Posterior cingulate gyrus (tissue), 11 donors: ENCODE measurements at regions of chr6 and their contacts with region 1.

Region 1: GRCh38 chr6:90478789-90479602 is 107.9 kb downstream of the MAP3K7 start:
- DNase-seq: peak; percentile 69 to 97 (median 84)

Region 2: GRCh38 chr6:89940225-89941027 is 538.6 kb before region 1 on chr6:
- intact Hi-C with region 1: loop called (anchors 1 kb)
- DNase-seq: peak in 9 of 10 donors; percentile 49 to 95 (median 79)

Region 3: GRCh38 chr6:90078513-90079289 is 400.3 kb before region 1 on chr6:
- intact Hi-C with region 1: loop called (anchors 10 kb)
- DNase-seq: no peak

Region 4: DNA sequence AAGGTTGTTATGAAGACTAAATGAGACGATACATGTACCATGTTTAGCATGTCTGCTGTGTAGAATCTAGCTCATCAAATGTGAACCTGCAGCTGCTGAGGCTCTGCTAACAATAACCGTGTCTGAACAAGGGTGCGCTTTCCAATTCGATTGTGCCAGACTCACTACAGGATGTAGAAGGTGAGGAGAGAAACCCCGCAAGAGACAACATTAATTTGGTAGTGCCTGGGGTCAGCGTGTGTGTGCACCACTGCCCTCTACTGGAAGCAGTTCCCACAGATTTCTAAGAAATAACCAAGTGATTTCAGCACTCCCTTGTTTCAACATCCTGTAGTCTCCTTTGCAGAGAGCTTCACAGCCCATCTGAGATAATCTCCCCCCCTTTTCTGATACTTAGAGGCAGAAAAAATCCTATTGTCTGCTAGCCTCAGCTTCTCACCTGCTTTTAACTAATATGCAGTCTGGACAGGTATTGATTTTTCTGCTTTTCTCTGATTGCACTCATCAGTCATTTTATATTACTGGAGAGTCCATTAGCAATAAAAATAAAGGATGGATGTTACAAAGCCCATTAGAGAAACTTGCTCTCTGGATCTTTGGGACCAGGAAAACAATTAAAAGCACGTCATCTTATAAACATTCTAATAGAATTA is 85.6 kb before region 1 on chr6:
- intact Hi-C with region 1: loop called (anchors 5 kb)
- DNase-seq: peak in 4 of 10 donors; percentile 45 to 90 (median 62)